K562 (cell line): ENCODE measurements at regions of chr16 and their contacts with region 1.

Region 1: GRCh38 chr16:19521471-19522396 is at the start of gene GDE1:
- DNase-seq: peak; percentile 94 to 98 (median 97)
- ATAC-seq: peak; percentile 87
- H3K4me3 ChIP-seq: peak within 1 kb of the TSS; percentile 73
- H3K27ac ChIP-seq: peak within 1 kb of the TSS; percentile 84
- H3K4me1 ChIP-seq: peaks cover 27 to 50% of the 10 kb centered on the region in 2 experiments; a peak in 4 of 5 replicates
- H3K27me3 ChIP-seq: no peaks in the 10 kb centered on the region
- CTCF ChIP-seq: peak; percentile 56 to 59 (median 58); a peak in 5 of 6 replicates
- EP300 ChIP-seq: no peak
- POLR2A ChIP-seq: peak; percentile 78
- RAD21 ChIP-seq: no peak; a peak in 1 of 4 replicates
- polyA plus RNA-seq, gene GDE1: 18.8 to 21.7 TPM

Region 2: GRCh38 chr16:19497176-19497575 is 24.6 kb before region 1 on chr16:
- CTCF ChIA-PET with region 1: no interaction called
- POLR2A ChIA-PET with region 1: no interaction called
- in situ Hi-C with region 1: no loop called
- intact Hi-C with region 1: no loop called
- DNase-seq: no peak
- ATAC-seq: no peak
- H3K4me3 ChIP-seq: no peak overlapping the region
- H3K27ac ChIP-seq: no peak overlapping the region
- H3K4me1 ChIP-seq: no peaks in the 10 kb centered on the region
- H3K27me3 ChIP-seq: no peaks in the 10 kb centered on the region
- CTCF ChIP-seq: no peak
- EP300 ChIP-seq: no peak
- POLR2A ChIP-seq: no peak
- RAD21 ChIP-seq: no peak

Region 3: DNA sequence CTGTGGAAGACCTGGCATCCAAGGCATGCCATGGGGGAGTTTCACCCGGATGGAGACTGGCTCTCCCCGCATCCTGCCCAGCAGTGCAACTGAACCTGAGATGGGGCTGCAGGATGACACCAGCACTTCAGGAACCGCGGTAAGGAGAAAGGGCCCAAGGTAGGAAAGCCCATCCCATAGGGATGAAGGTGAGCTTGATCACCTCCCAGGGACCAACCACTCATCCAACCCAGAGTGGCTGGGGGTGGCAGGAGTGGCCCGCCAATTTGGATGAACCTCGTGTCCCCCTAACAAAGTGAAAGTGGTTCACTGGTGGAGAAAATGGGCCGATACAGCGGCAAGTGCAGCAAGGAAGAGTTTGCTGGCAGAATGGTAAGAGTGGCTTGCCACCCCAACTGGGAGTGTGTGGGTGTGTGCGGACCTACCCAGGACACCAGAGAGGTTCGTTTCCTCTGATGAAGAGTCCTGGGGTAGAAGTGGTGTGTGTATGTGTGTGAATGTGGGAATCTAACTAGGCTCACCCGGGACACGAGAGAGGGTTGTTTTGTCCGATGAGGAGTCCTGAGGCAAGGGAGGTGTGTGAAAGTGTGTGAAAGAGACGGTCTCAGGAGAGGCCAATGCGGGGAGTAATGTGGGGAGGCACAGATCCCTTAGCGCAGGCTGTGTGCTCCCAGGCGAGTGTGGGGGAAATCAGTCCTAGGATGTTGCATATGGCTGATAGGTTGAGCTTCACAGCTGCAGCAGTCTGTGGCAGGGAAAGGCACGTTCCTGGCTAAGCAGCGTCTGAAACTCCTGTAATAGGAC is 1153.2 kb after region 1 on chr16:
- CTCF ChIA-PET with region 1: no interaction called
- POLR2A ChIA-PET with region 1: no interaction called
- in situ Hi-C with region 1: no loop called
- intact Hi-C with region 1: loop called (anchors 5 kb)
- DNase-seq: peak in 2 of 4 experiments; percentile 23 to 54
- ATAC-seq: peak; percentile 66
- H3K4me3 ChIP-seq: peak overlapping the region; percentile 51
- H3K27ac ChIP-seq: peak overlapping the region; percentile 92
- H3K4me1 ChIP-seq: peaks cover 10 to 34% of the 10 kb centered on the region in 2 experiments
- H3K27me3 ChIP-seq: no peaks in the 10 kb centered on the region
- CTCF ChIP-seq: no peak
- EP300 ChIP-seq: no peak
- POLR2A ChIP-seq: no peak
- RAD21 ChIP-seq: no peak